Activated CD4-positive, alpha-beta T cell treated with anti-CD3 and anti-CD28 coated beads for 36 hours (primary cell): ENCODE measurements at regions of chr11 and their contacts with region 1.

Region 1: DNA sequence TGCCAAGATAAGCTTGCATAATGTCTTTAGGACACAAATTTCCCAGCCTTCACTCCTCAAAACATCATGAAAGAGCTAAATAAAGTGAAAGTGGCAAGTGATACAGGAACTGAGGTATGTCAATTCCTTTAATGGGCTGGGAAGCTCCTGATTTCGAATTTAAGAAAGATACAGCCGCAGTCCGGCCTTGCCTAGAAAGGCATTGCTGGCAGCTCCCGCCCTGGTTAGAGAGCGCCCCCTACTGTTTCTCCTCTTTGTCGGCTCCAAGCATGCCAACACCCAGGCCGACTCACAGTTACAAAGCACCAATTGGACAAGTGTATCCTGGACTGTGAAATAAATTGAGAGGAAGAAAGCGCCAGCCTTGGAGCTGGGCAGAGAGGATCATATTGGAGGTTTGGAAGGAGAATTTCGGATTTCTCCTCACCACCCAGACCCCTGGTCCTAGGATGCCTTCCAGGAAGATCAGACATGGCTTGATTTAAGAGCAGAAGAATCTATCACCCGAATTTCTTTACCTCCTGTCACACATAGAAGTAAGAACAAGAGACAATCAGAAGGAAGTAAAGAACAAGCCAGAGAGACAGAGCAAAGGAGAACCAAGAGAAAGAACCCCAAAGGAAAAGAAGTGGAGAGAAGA is 84.0 kb downstream of the FAM76B start:
- DNase-seq: peak; percentile 92
- ATAC-seq: peak; percentile 83
- H3K4me3 Mint-ChIP-seq: no peak overlapping the region
- H3K27ac Mint-ChIP-seq: no peak overlapping the region
- H3K4me1 Mint-ChIP-seq: peaks cover 12% of the 10 kb centered on the region
- H3K27me3 Mint-ChIP-seq: no peaks in the 10 kb centered on the region

Region 2: GRCh38 chr11:95254131-95254704 is 451.4 kb before region 1 on chr11:
- CTCF ChIA-PET with region 1: interaction called, 10 read pairs
- POLR2A ChIA-PET with region 1: no interaction called
- intact Hi-C with region 1: no loop called
- DNase-seq: peak; percentile 89
- ATAC-seq: peak; percentile 99
- H3K4me3 Mint-ChIP-seq: peak overlapping the region; percentile 79
- H3K27ac Mint-ChIP-seq: peak overlapping the region; percentile 95
- H3K4me1 Mint-ChIP-seq: peaks cover 46% of the 10 kb centered on the region
- H3K27me3 Mint-ChIP-seq: no peaks in the 10 kb centered on the region

Region 3: GRCh38 chr11:95375886-95376285 is 329.7 kb before region 1 on chr11:
- CTCF ChIA-PET with region 1: no interaction called
- POLR2A ChIA-PET with region 1: no interaction called
- intact Hi-C with region 1: loop called in 1 of 2 experiments (anchors 10 kb)
- DNase-seq: no peak
- ATAC-seq: no peak
- H3K4me3 Mint-ChIP-seq: no peak overlapping the region
- H3K27ac Mint-ChIP-seq: no peak overlapping the region
- H3K4me1 Mint-ChIP-seq: no peaks in the 10 kb centered on the region
- H3K27me3 Mint-ChIP-seq: peaks cover 6% of the 10 kb centered on the region

Region 4: GRCh38 chr11:95584589-95584988 is 121.0 kb before region 1 on chr11:
- CTCF ChIA-PET with region 1: interaction called, 5 read pairs
- POLR2A ChIA-PET with region 1: no interaction called
- intact Hi-C with region 1: loop called in 1 of 2 experiments (anchors 10 kb)
- DNase-seq: no peak
- ATAC-seq: peak; percentile 32
- H3K4me3 Mint-ChIP-seq: no peak overlapping the region
- H3K27ac Mint-ChIP-seq: no peak overlapping the region
- H3K4me1 Mint-ChIP-seq: peaks cover 17% of the 10 kb centered on the region
- H3K27me3 Mint-ChIP-seq: no peaks in the 10 kb centered on the region

Region 5: GRCh38 chr11:95715777-95716241 is 10.2 kb after region 1 on chr11:
- CTCF ChIA-PET with region 1: interaction called, 25 read pairs
- POLR2A ChIA-PET with region 1: no interaction called
- intact Hi-C with region 1: loop called in 1 of 2 experiments (anchors 2 kb)
- DNase-seq: peak; percentile 71
- ATAC-seq: peak; percentile 76
- H3K4me3 Mint-ChIP-seq: no peak overlapping the region
- H3K27ac Mint-ChIP-seq: peak overlapping the region; percentile 69
- H3K4me1 Mint-ChIP-seq: peaks cover 50% of the 10 kb centered on the region
- H3K27me3 Mint-ChIP-seq: no peaks in the 10 kb centered on the region

Region 6: GRCh38 chr11:95732930-95733602 is 27.5 kb after region 1 on chr11:
- CTCF ChIA-PET with region 1: no interaction called
- POLR2A ChIA-PET with region 1: no interaction called
- intact Hi-C with region 1: no loop called
- DNase-seq: no peak
- ATAC-seq: no peak
- H3K4me3 Mint-ChIP-seq: no peak overlapping the region
- H3K27ac Mint-ChIP-seq: no peak overlapping the region
- H3K4me1 Mint-ChIP-seq: peaks cover 7% of the 10 kb centered on the region
- H3K27me3 Mint-ChIP-seq: peaks cover 3% of the 10 kb centered on the region

Region 7: GRCh38 chr11:96001037-96001436 is 295.4 kb after region 1 on chr11:
- CTCF ChIA-PET with region 1: no interaction called
- POLR2A ChIA-PET with region 1: no interaction called
- intact Hi-C with region 1: no loop called
- DNase-seq: no peak
- ATAC-seq: no peak
- H3K4me3 Mint-ChIP-seq: no peak overlapping the region
- H3K27ac Mint-ChIP-seq: no peak overlapping the region
- H3K4me1 Mint-ChIP-seq: peaks cover 14% of the 10 kb centered on the region
- H3K27me3 Mint-ChIP-seq: no peaks in the 10 kb centered on the region